Caco-2 (cell line): ENCODE measurements at regions of chr1 and their contacts with region 1.

Region 1: DNA sequence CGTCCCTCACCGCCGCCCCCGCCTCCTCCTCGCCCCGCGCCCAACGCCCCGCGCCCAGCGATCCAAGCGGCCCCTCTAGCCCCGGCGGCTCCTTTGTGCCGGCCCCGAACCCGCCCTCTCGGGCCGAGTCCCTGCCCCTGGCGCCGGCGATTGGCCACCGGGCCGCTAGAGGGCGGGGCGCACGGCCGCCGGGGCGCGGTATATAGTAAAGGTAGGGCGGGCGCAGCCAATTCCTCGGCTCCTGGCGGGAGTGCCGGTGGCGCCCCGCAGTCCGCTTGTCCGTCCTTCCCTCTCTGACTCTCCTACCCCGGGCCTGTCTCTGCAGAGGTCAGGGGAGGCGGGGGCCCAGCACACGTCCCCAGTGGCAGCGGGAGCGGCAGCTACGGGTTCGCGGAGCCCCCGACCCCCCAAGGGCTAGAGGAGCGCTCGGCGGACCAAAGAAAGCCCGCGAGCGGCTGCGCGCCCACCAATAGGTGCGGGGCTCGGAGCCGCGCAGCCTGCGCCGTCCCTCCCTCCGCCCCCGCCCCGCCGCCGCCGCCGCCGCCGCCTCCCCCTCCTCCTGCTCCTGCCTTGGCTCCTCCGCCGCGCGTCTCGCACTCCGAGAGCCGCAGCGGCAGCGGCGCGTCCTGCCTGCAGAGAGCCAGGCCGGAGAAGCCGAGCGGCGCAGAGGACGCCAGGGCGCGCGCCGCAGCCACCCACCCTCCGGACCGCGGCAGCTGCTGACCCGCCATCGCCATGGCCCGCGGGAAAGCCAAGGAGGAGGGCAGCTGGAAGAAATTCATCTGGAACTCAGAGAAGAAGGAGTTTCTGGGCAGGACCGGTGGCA is at the start of gene ATP1B1:
- DNase-seq: peak; percentile 93 to 98
- H3K4me3 ChIP-seq: peak within 1 kb of the TSS; percentile 99
- H3K4me3 Mint-ChIP-seq: peak within 1 kb of the TSS; percentile 99
- H3K27ac Mint-ChIP-seq: peak within 1 kb of the TSS; percentile 97
- H3K4me1 ChIP-seq: peaks cover 56% of the 10 kb centered on the region
- H3K4me1 Mint-ChIP-seq: peaks cover 24% of the 10 kb centered on the region
- H3K27me3 ChIP-seq: no peaks in the 10 kb centered on the region
- H3K27me3 Mint-ChIP-seq: no peaks in the 10 kb centered on the region
- CTCF ChIP-seq: peak in 1 of 2 experiments; percentile 19
- total RNA-seq, gene ATP1B1: 320 and 326 TPM in 2 replicates

Region 2: DNA sequence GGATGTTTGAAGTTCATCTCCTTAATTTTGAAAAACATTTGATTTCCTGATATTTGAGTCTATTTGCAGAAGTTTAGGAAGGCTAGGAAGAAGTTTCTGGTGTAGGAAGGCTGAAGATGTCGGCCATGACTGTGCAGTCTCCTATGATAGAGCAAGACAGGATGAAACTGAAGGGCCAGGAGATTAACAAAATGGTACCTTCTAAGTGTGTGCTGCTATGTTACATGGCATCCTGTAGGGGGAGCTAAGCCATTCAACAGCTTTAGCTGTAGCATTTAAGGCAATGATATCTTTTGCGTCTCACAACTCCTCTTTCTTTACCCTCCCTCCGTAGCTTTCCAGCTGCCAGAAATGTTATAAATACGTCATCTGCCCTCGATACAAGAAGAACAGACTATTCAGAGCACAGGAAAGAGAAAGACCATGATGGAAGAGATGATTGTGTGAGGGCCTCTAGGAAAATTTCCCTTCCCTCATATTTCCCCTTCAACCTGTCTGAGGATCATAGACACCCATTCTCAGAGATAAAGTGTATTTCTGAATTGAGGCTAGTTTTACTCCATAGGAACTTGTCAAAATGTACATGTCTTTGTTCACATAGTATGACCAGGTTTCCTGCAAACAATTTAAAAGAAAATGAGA is 468.8 kb before region 1 on chr1:
- CTCF ChIA-PET with region 1: no interaction called
- POLR2A ChIA-PET with region 1: no interaction called
- intact Hi-C with region 1: loop called (anchors 10 kb)
- DNase-seq: peak in 1 of 2 experiments; percentile 19
- H3K4me3 ChIP-seq: no peak overlapping the region
- H3K4me3 Mint-ChIP-seq: no peak overlapping the region
- H3K27ac Mint-ChIP-seq: no peak overlapping the region
- H3K4me1 ChIP-seq: peaks cover 8% of the 10 kb centered on the region; the same call in 1 of the 2 replicates
- H3K4me1 Mint-ChIP-seq: peaks cover 15% of the 10 kb centered on the region
- H3K27me3 ChIP-seq: no peaks in the 10 kb centered on the region
- H3K27me3 Mint-ChIP-seq: no peaks in the 10 kb centered on the region
- CTCF ChIP-seq: peak; percentile 34 to 52

Region 3: DNA sequence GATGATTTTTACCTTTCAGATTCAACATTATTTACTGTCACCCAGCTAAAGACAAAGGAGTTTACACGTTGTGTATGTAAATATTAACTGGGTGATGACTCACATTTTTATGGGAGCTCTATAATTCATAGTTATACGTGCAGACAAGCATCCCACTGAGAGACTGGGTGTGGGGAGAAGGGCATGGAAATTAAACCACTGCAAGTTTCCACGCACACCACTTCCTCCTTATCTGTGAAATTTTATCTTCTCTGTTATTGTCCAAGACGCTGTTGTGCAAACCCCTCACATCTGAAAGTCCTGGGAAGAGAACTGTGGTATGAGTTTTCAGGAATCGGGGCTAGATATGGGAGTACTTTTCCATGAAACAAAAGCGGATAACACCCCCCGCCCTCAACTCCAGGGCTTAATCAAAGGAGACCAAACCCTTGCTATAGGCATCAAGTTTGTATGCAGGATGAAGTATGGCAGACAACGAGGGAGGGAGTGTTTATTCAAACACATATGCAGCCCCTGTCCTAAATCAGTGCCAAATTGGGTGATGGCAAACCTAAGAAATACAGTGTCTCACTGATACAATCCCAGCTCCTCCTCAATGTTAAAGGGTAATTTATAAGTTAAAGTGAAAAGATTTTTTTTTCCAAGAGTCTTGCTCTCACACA is 354.0 kb before region 1 on chr1:
- CTCF ChIA-PET with region 1: no interaction called
- POLR2A ChIA-PET with region 1: no interaction called
- intact Hi-C with region 1: loop called (anchors 5 kb)
- DNase-seq: no peak
- H3K4me3 ChIP-seq: no peak overlapping the region
- H3K4me3 Mint-ChIP-seq: no peak overlapping the region
- H3K27ac Mint-ChIP-seq: peak overlapping the region; percentile 16
- H3K4me1 ChIP-seq: peaks cover 19% of the 10 kb centered on the region; the same call in 1 of the 2 replicates
- H3K4me1 Mint-ChIP-seq: peaks cover 39% of the 10 kb centered on the region
- H3K27me3 ChIP-seq: no peaks in the 10 kb centered on the region
- H3K27me3 Mint-ChIP-seq: no peaks in the 10 kb centered on the region
- CTCF ChIP-seq: no peak

Region 4: GRCh38 chr1:168863772-168864171 is 242.5 kb before region 1 on chr1:
- CTCF ChIA-PET with region 1: no interaction called
- POLR2A ChIA-PET with region 1: no interaction called
- intact Hi-C with region 1: loop called (anchors 1 kb)
- DNase-seq: no peak
- H3K4me3 ChIP-seq: no peak overlapping the region
- H3K4me3 Mint-ChIP-seq: no peak overlapping the region
- H3K27ac Mint-ChIP-seq: peak overlapping the region; percentile 48
- H3K4me1 ChIP-seq: peaks cover 25% of the 10 kb centered on the region
- H3K4me1 Mint-ChIP-seq: peaks cover 29% of the 10 kb centered on the region
- H3K27me3 ChIP-seq: no peaks in the 10 kb centered on the region
- H3K27me3 Mint-ChIP-seq: no peaks in the 10 kb centered on the region
- CTCF ChIP-seq: no peak

Region 5: DNA sequence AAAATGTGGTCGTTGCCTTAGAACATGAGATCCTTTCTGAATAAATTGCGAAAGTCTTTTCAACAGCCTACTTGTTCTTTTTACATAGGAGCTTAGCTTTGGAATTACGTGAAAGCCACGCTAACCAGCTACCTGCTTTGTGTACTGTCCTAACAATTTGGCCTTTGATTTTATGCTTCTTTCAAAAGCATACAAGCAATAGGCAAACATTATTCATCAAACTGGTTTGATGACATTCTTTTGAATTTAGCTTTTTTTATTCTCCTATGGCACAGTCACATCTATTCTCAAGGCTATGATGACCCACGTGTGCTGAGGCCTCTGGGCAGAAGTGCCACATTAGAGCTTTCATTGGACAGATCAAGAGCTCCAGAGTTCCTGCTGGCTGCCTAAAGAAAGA is 199.3 kb before region 1 on chr1:
- CTCF ChIA-PET with region 1: interaction called, 3 read pairs
- POLR2A ChIA-PET with region 1: interaction called, 3 read pairs
- intact Hi-C with region 1: loop called (anchors 1 kb)
- DNase-seq: peak; percentile 52 to 67
- H3K4me3 ChIP-seq: no peak overlapping the region
- H3K4me3 Mint-ChIP-seq: no peak overlapping the region
- H3K27ac Mint-ChIP-seq: peak overlapping the region; percentile 61
- H3K4me1 ChIP-seq: peaks cover 29% of the 10 kb centered on the region
- H3K4me1 Mint-ChIP-seq: peaks cover 26% of the 10 kb centered on the region
- H3K27me3 ChIP-seq: no peaks in the 10 kb centered on the region
- H3K27me3 Mint-ChIP-seq: no peaks in the 10 kb centered on the region
- CTCF ChIP-seq: no peak

Region 6: DNA sequence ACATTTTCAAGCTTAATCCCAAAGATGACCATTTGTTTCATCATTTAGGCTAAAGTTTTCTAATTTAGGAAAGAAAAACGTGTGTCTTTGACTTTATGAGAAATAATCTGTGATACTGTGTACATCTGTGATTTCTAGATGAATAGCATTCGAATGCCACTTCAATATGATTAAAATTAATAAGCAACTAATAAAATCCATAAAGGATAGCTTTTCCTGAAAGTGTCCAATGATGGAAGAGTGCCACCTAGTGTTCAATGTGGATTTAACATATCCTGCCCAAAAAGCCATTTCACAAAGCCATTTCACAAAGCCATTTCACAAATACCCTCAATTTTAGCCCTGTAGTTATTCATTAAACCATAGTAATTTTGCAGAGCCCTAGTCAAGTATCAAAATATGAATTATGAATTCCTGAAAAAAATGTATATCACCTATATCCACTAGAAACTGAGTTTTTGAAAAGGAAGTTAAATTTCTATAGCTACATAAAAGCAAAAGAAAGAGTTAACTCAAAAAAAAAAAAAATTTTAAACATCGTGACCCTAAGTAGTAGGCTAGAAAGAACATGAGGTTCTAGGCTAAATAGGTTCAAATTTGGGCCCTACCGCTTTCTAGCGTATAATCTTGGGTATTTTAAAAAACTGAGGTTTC is 242.2 kb after region 1 on chr1:
- CTCF ChIA-PET with region 1: interaction called, 3 read pairs
- POLR2A ChIA-PET with region 1: no interaction called
- intact Hi-C with region 1: loop called (anchors 1 kb)
- DNase-seq: peak in 1 of 2 experiments; percentile 62
- H3K4me3 ChIP-seq: no peak overlapping the region
- H3K4me3 Mint-ChIP-seq: no peak overlapping the region
- H3K27ac Mint-ChIP-seq: no peak overlapping the region
- H3K4me1 ChIP-seq: peaks cover 30% of the 10 kb centered on the region
- H3K4me1 Mint-ChIP-seq: peaks cover 34% of the 10 kb centered on the region
- H3K27me3 ChIP-seq: no peaks in the 10 kb centered on the region
- H3K27me3 Mint-ChIP-seq: no peaks in the 10 kb centered on the region
- CTCF ChIP-seq: peak; percentile 67 to 78